Dorsolateral prefrontal cortex (tissue), 120 donors: ENCODE measurements at regions of chr3 and their contacts with region 1.

Region 1: GRCh38 chr3:138300647-138301046 is 29.0 kb downstream of the NME9 start:
- DNase-seq: peak in 3 of 10 donors; percentile 44 to 66 (median 46)
- H3K4me3 ChIP-seq: no peak overlapping the region
- H3K27ac ChIP-seq: peak overlapping the region in 51 of 59 donors; percentile 6 to 83 (median 66)
- H3K27me3 ChIP-seq: no peaks in the 10 kb centered on the region
- CTCF ChIP-seq: no peak

Region 2: DNA sequence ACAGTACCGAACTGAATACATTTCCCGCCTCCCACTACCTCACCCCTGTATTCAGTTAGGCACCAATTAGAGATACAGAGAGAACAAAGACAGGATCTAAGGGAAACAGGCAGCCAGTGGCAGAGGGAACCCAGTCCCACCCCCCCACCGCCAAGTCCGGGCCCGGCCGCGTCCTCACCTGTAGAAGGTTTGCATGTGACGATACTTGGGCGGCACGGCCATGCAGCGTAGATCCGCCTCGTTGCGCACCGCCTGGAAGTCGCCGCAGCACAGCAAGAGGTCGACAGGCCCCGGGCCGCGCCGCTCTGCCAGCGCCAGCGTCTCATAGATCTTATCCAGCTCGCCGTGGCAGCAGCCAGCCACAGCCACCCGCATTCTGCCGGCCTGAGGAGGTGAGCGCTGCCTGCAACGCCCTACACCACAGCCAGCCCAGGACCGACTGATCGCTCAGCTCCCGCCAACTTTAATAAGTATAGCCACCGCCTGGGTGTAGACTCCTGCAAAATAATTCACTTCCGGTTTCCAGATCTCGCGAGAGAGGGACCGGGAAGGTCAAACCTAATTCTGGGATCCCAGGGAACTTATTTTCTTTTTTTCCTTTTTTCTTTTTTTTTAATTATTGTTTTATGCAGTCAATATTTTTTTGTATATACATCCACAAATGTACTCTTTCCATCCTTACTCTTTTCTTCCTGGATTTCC is 126.1 kb before region 1 on chr3 and contains the start of gene DBR1:
- intact Hi-C with region 1: loop called in 1 of 2 experiments (anchors 10 kb)
- DNase-seq: peak; percentile 46 to 82 (median 62)
- H3K4me3 ChIP-seq: peak within 1 kb of the TSS; percentile 53 to 98 (median 85)
- H3K27ac ChIP-seq: peak within 1 kb of the TSS in 54 of 59 donors; percentile 6 to 92 (median 72)
- H3K27me3 ChIP-seq: no peaks in the 10 kb centered on the region
- CTCF ChIP-seq: peak in 18 of 56 donors; percentile 6 to 51 (median 20)
- total RNA-seq, gene DBR1: 5.7 to 15.5 (median 11.1) TPM

Region 3: GRCh38 chr3:138186803-138187295 is 113.8 kb before region 1 on chr3:
- intact Hi-C with region 1: loop called in 1 of 2 experiments (anchors 10 kb)
- DNase-seq: peak; percentile 83 to 92 (median 88)
- H3K4me3 ChIP-seq: peak overlapping the region; percentile 61 to 99 (median 91)
- H3K27ac ChIP-seq: peak overlapping the region in 58 of 59 donors; percentile 83 to 99 (median 94)
- H3K27me3 ChIP-seq: no peaks in the 10 kb centered on the region
- CTCF ChIP-seq: peak in 4 of 56 donors; percentile 14 to 57 (median 37)

Region 4: GRCh38 chr3:138675393-138675792 is 374.7 kb after region 1 on chr3:
- intact Hi-C with region 1: no loop called
- DNase-seq: no peak
- H3K4me3 ChIP-seq: no peak overlapping the region
- H3K27ac ChIP-seq: no peak overlapping the region
- H3K27me3 ChIP-seq: no peaks in the 10 kb centered on the region
- CTCF ChIP-seq: no peak